GM10248 (cell line): ENCODE measurements at regions of chr22 and their contacts with region 1.

Region 1: GRCh38 chr22:28810821-28811491 is 10.6 kb upstream of the XBP1 start:
- DNase-seq: no peak
- CTCF ChIP-seq: no peak

Region 2: GRCh38 chr22:28759861-28760560 is 50.9 kb before region 1 on chr22:
- CTCF ChIA-PET with region 1: no interaction called
- POLR2A ChIA-PET with region 1: interaction called, 15 read pairs
- DNase-seq: no peak
- CTCF ChIP-seq: no peak

Region 3: GRCh38 chr22:28800308-28801077 is 10.5 kb before region 1 on chr22 and contains the start of gene XBP1:
- CTCF ChIA-PET with region 1: interaction called, 9 read pairs
- POLR2A ChIA-PET with region 1: interaction called, 12 read pairs
- DNase-seq: peak; percentile 96
- CTCF ChIP-seq: no peak

Region 4: DNA sequence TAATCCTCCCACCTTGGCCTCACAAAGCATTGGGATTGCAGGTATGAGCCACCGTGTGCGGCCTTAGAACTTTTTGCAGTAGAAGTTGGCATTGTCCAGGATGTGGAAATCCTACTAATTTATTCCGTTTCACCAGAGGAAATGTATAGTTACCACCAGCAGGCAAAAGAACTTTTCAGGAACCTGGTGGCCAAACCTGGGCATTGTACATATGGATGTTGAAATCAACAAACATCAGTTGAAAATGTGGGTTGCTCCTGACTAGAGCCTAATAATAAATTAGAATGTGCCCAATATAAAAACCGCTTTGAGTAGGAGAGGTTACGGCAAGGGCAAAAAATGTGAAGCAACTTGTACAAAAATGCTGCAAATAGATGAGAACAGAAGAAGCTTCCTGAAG is 30.2 kb after region 1 on chr22:
- CTCF ChIA-PET with region 1: no interaction called
- POLR2A ChIA-PET with region 1: no interaction called
- DNase-seq: no peak
- CTCF ChIP-seq: no peak

Region 5: GRCh38 chr22:28899199-28899853 is 88.4 kb after region 1 on chr22:
- CTCF ChIA-PET with region 1: no interaction called
- POLR2A ChIA-PET with region 1: no interaction called
- DNase-seq: no peak
- CTCF ChIP-seq: no peak